ENCODE measurements at regions of chr9 and their contacts with region 1.

Region 1: GRCh38 chr9:105447814-105448812 is at the start of gene FSD1L:
- DNase-seq: peak; percentile 90
- H3K4me3 Mint-ChIP-seq: peak within 1 kb of the TSS; percentile 93
- H3K27ac Mint-ChIP-seq: peak within 1 kb of the TSS; percentile 83
- H3K4me1 Mint-ChIP-seq: peaks cover 20% of the 10 kb centered on the region
- H3K27me3 Mint-ChIP-seq: no peaks in the 10 kb centered on the region
- CTCF ChIP-seq: peak; percentile 15
- total RNA-seq, gene FSD1L: 6.8 and 7.2 TPM in 2 replicates

Region 2: DNA sequence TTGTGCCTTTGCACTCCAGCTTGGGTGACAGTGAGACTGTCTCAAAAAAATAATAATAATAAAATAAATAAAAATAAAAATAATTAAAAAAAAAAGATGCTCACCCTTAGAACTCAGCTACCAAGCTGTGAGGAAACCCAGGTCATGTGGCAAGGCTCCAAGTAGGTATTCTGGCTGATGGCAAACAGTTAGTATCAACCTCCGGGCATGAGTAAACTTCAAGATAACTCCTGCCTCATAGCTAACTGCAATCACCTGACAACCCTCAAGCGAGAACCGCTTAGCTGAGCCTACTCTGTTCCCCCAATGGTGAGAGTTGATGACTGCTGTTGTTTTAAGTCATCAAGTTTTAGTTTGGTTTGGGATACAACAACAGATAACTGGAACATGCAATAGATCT is 209.8 kb before region 1 on chr9:
- CTCF ChIA-PET with region 1: no interaction called
- POLR2A ChIA-PET with region 1: no interaction called
- intact Hi-C with region 1: no loop called
- DNase-seq: no peak
- H3K4me3 Mint-ChIP-seq: no peak overlapping the region
- H3K27ac Mint-ChIP-seq: no peak overlapping the region
- H3K4me1 Mint-ChIP-seq: peaks cover 11% of the 10 kb centered on the region
- H3K27me3 Mint-ChIP-seq: peaks cover 34% of the 10 kb centered on the region
- CTCF ChIP-seq: no peak

Region 3: GRCh38 chr9:105557771-105558610 is 109.9 kb after region 1 on chr9 and contains the start of gene FKTN:
- CTCF ChIA-PET with region 1: interaction called, 4 read pairs
- POLR2A ChIA-PET with region 1: no interaction called
- intact Hi-C with region 1: loop called (anchors 5 kb)
- DNase-seq: peak; percentile 84
- H3K4me3 Mint-ChIP-seq: peak within 1 kb of the TSS; percentile 94
- H3K27ac Mint-ChIP-seq: peak within 1 kb of the TSS; percentile 66
- H3K4me1 Mint-ChIP-seq: peaks cover 12% of the 10 kb centered on the region
- H3K27me3 Mint-ChIP-seq: no peaks in the 10 kb centered on the region
- CTCF ChIP-seq: no peak
- total RNA-seq, gene FKTN: 34.5 and 38.3 TPM in 2 replicates

Region 4: DNA sequence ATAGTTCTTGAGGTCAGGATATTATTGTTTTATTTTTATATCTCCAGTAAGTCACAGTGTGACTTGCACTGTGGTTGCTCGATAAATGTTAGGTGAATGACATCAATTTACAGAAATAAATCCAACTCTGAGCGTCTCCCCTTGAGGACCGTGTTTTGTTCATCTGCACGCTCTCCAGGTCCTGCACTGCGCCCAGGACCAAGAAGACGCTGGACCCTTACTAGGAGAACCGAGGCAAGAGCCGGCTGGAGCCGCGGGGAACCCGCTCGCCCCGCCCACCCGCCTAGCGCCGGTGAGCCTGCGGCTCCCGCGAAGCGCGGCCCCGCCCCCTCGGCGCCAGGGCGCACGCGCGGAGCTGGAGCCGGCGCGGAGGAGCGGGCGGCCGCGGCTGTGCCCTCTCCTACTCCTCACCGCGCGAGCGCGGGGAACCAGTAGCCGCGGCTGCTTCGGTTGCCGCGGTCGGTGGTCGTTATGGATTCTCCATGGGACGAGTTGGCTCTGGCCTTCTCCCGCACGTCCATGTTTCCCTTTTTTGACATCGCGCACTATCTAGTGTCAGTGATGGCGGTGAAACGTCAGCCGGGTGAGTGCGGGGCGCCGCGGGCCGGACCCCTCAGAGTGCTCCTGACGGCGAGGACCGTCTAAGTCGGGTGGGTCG is 246.2 kb after region 1 on chr9 and contains the start of gene TMEM38B:
- CTCF ChIA-PET with region 1: interaction called, 3 read pairs
- POLR2A ChIA-PET with region 1: interaction called, 5 read pairs
- intact Hi-C with region 1: loop called (anchors 5 kb)
- DNase-seq: peak; percentile 78
- H3K4me3 Mint-ChIP-seq: peak within 1 kb of the TSS; percentile 85
- H3K27ac Mint-ChIP-seq: peak within 1 kb of the TSS; percentile 41
- H3K4me1 Mint-ChIP-seq: peaks cover 25% of the 10 kb centered on the region
- H3K27me3 Mint-ChIP-seq: no peaks in the 10 kb centered on the region
- CTCF ChIP-seq: no peak
- total RNA-seq, gene TMEM38B: 12.5 and 18.4 TPM in 2 replicates